Activated CD8-positive, alpha-beta T cell treated with anti-CD3 and anti-CD28 coated beads, Interleukin-2, amount 10 ng/mL, durations not matched to agents 7 days and 5 days (primary cell): ENCODE measurements at regions of chr14 and their contacts with region 1.

Region 1: GRCh38 chr14:105045710-105046326 is 19.4 kb downstream of the GPR132 start:
- DNase-seq: peak; percentile 95
- ATAC-seq: peak; percentile 96
- H3K4me3 Mint-ChIP-seq: no peak overlapping the region
- H3K27ac Mint-ChIP-seq: peak overlapping the region; percentile 56
- H3K4me1 Mint-ChIP-seq: peaks cover 17% of the 10 kb centered on the region
- H3K27me3 Mint-ChIP-seq: no peaks in the 10 kb centered on the region

Region 2: DNA sequence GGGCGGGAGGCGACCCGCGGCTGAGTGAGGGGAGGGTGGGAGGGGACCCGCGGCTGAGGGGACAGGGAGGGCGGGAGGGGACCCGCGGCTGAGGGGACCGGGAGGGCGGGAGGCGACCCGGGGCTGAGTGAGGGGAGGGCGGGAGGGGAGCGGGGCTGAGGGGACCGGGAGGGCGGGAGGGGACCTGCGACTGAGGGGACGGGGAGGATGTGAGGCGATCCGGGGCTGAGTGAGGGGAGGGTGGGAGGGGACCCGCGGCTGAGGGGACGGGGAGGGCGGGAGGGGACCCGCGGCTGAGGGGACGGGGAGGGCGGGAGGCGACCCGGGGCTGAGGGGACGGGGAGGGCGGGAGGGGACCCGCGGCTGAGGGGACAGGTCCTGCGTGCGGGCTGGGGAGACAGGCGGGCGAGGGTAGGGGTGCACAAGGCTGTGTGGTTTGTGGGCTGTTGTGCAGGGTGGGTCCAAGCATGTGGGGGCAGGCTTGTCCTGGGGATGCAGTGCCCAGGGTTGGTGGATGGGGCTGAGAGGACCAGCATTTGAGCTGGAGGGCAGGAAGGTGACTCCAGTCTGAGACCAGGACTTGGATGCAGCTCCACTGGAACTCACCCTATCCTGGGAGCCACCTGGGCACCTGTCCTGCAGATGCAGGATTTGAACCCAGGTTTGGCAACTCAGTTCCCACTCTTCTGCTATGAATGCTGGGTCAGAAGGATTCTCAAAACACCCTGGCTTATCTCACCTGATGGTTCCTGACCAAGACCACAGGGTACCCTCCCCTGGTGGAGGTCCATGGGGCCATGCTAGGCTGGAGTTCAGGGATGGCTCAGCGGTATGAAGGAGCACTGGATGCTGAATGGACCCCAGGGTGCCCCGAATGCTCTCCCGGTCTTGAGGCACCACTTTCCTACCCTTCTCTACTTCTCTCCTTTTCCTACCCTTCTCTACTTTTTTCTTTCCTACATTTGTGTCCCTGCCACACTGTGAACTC is 111.8 kb before region 1 on chr14:
- CTCF ChIA-PET with region 1: interaction called, 11 read pairs
- POLR2A ChIA-PET with region 1: no interaction called
- DNase-seq: no peak
- ATAC-seq: no peak
- H3K4me3 Mint-ChIP-seq: peak overlapping the region; percentile 31
- H3K27ac Mint-ChIP-seq: no peak overlapping the region
- H3K4me1 Mint-ChIP-seq: no peaks in the 10 kb centered on the region
- H3K27me3 Mint-ChIP-seq: peaks cover 30% of the 10 kb centered on the region

Region 3: DNA sequence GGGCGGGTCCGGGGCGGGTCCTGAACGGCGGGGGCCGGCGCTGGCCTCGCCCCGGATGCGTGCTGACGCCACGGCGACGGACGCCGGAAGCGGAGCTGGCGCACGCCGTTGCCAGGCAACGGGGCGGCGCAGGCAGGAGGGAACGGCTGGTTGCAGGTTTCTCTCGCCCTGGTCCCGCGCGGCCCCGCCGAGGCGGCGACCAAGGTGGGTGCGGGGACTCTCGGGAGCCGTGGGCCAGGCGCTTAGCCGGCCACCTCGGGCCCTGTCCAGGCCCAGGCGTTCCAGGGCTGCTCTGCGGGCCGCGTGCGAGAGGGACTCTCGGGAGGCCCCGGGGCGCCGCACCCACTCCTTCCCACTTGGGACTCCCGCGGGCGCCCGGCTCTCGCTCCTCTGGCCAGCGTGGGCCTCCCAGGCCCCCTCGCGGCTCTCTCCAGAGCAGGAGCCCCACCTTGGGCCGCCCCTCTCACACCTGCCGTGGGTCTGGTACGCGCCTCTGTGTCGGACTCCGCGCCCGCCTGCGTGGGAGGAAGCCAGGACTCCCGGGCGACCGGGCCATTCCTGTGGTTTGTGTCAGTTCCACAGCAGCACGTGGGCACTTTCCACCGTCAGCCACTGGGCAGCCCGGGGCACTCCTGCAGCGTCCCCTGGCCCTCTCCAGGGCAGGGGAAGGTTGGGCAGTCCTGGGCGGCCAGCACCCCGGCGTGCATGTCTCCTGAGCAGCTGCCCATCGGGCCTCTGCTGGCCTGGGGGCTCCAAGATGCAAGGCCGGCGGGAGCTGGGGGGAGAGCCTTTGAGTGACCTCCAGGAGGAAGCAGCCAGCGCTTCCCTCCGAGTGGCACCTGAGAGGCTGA is 59.9 kb before region 1 on chr14 and contains the start of gene CLBA1:
- CTCF ChIA-PET with region 1: interaction called, 25 read pairs
- POLR2A ChIA-PET with region 1: no interaction called
- DNase-seq: peak; percentile 90
- ATAC-seq: peak; percentile 89
- H3K4me3 Mint-ChIP-seq: peak within 1 kb of the TSS; percentile 70
- H3K27ac Mint-ChIP-seq: peak within 1 kb of the TSS; percentile 80
- H3K4me1 Mint-ChIP-seq: peaks cover 12% of the 10 kb centered on the region
- H3K27me3 Mint-ChIP-seq: peaks cover 3% of the 10 kb centered on the region
- total RNA-seq, gene CLBA1: 0.55 to 0.95 TPM

Region 4: GRCh38 chr14:105020815-105021655 is 24.8 kb before region 1 on chr14 and contains the start of gene CDCA4:
- CTCF ChIA-PET with region 1: interaction called, 38 read pairs
- POLR2A ChIA-PET with region 1: interaction called, 4 read pairs
- DNase-seq: peak; percentile 97
- ATAC-seq: peak; percentile 90
- H3K4me3 Mint-ChIP-seq: peak within 1 kb of the TSS; percentile 93
- H3K27ac Mint-ChIP-seq: peak within 1 kb of the TSS; percentile 91
- H3K4me1 Mint-ChIP-seq: peaks cover 65% of the 10 kb centered on the region
- H3K27me3 Mint-ChIP-seq: no peaks in the 10 kb centered on the region
- total RNA-seq, gene CDCA4: 59.9 to 62.3 TPM

Region 5: GRCh38 chr14:105034314-105035039 is 11.3 kb before region 1 on chr14:
- CTCF ChIA-PET with region 1: interaction called, 32 read pairs
- POLR2A ChIA-PET with region 1: interaction called, 4 read pairs
- DNase-seq: no peak
- ATAC-seq: no peak
- H3K4me3 Mint-ChIP-seq: no peak overlapping the region
- H3K27ac Mint-ChIP-seq: no peak overlapping the region
- H3K4me1 Mint-ChIP-seq: peaks cover 15% of the 10 kb centered on the region
- H3K27me3 Mint-ChIP-seq: peaks cover 5% of the 10 kb centered on the region

Region 6: GRCh38 chr14:105086833-105087307 is 41.1 kb after region 1 on chr14:
- CTCF ChIA-PET with region 1: interaction called, 28 read pairs
- POLR2A ChIA-PET with region 1: interaction called, 6 read pairs
- DNase-seq: peak; percentile 90
- ATAC-seq: peak; percentile 90
- H3K4me3 Mint-ChIP-seq: peak overlapping the region; percentile 74
- H3K27ac Mint-ChIP-seq: no peak overlapping the region
- H3K4me1 Mint-ChIP-seq: peaks cover 31% of the 10 kb centered on the region
- H3K27me3 Mint-ChIP-seq: peaks cover 19% of the 10 kb centered on the region

Region 7: GRCh38 chr14:105118656-105119403 is 73.0 kb after region 1 on chr14:
- CTCF ChIA-PET with region 1: no interaction called
- POLR2A ChIA-PET with region 1: no interaction called
- DNase-seq: no peak
- ATAC-seq: no peak
- H3K4me3 Mint-ChIP-seq: no peak overlapping the region
- H3K27ac Mint-ChIP-seq: no peak overlapping the region
- H3K4me1 Mint-ChIP-seq: no peaks in the 10 kb centered on the region
- H3K27me3 Mint-ChIP-seq: peaks cover 6% of the 10 kb centered on the region